Posterior vena cava (tissue), 2 donors: ENCODE measurements at regions of chr3 and their contacts with region 1.

Region 1: DNA sequence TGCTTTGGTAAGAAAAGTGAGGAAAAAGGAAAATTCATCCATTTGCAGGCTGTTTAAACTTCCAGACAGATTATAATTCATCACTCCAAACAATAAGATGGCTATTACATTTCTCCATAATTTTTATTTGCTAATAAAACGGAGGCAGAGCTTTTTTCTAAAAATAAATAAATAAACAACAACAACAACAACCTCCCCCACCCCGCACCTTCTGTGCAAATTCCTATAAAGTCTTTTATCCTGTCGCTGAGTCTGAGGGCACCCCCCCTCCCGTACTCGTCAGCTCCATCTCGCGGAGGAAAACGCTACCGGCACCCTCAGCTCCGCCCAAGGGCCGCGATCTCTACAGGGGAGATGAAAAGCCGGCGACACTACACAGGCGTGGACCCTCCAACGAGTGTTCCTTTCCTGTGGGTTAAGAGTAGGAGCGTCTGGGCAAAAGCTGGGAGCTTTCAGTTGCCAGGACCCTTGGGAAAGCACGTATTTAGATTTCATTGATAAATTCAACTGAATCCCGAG is 1.0 kb upstream of the ATP1B3 start:
- DNase-seq: peak; percentile 96

Region 2: GRCh38 chr3:141796081-141796888 is 79.1 kb before region 1 on chr3:
- intact Hi-C with region 1: loop called in 1 of 2 experiments (anchors 5 kb)
- DNase-seq: no peak